MCF 10A (cell line): ENCODE measurements at regions of chr12 and their contacts with region 1.

Region 1: DNA sequence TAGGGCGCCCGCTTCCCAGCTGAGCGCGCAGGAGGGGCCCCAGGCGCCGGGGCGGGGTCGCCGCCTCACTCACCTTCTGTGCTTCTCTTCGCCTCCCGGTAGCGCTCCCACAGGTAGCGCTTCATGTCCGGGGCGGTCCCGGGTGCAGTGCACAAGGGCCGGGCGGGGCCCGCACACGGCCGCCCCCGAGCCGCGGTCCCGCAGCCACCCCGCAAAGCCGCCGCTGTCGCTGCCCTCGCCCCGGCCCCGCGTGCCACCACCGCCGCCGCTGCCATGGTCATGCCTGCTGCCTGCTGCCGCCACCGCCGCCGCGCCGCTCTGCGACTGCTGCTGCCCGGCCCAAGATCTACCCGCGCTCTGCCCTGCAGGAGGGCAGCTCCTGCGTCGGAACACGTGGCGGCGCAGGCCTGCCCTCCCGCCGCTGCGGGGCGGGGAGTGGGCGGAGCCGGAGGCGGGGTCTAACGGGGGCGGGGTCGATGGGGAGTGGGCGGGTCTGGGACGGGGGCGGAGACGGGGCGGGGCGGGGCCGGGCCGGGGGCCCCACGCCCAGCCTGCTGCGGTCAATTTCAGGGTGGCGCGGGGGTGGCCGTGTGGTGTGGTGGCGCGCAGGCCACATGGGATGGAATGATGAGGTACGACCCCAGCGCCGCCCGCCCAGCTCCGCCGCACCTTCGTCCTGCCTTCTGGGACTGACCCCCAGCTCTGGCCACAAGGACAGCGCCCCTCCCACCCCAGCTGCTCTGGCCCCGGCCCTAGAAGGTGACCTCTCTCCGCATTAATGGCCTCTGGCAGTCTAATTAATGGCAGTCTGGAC is at the start of gene NT5DC3:
- DNase-seq: peak; percentile 83
- H3K4me3 Mint-ChIP-seq: peak within 1 kb of the TSS; percentile 89
- H3K27ac Mint-ChIP-seq: peak within 1 kb of the TSS; percentile 76
- H3K4me1 Mint-ChIP-seq: peaks cover 25% of the 10 kb centered on the region
- H3K27me3 Mint-ChIP-seq: no peaks in the 10 kb centered on the region
- CTCF ChIP-seq: peak; percentile 13
- total RNA-seq, gene NT5DC3: 15.1 and 18.3 TPM in 2 replicates

Region 2: GRCh38 chr12:103806803-103807202 is 34.3 kb before region 1 on chr12:
- CTCF ChIA-PET with region 1: interaction called, 7 read pairs
- POLR2A ChIA-PET with region 1: interaction called, 13 read pairs
- intact Hi-C with region 1: loop called (anchors 1 kb)
- DNase-seq: peak; percentile 27
- H3K4me3 Mint-ChIP-seq: no peak overlapping the region
- H3K27ac Mint-ChIP-seq: no peak overlapping the region
- H3K4me1 Mint-ChIP-seq: peaks cover 37% of the 10 kb centered on the region
- H3K27me3 Mint-ChIP-seq: no peaks in the 10 kb centered on the region
- CTCF ChIP-seq: no peak

Region 3: DNA sequence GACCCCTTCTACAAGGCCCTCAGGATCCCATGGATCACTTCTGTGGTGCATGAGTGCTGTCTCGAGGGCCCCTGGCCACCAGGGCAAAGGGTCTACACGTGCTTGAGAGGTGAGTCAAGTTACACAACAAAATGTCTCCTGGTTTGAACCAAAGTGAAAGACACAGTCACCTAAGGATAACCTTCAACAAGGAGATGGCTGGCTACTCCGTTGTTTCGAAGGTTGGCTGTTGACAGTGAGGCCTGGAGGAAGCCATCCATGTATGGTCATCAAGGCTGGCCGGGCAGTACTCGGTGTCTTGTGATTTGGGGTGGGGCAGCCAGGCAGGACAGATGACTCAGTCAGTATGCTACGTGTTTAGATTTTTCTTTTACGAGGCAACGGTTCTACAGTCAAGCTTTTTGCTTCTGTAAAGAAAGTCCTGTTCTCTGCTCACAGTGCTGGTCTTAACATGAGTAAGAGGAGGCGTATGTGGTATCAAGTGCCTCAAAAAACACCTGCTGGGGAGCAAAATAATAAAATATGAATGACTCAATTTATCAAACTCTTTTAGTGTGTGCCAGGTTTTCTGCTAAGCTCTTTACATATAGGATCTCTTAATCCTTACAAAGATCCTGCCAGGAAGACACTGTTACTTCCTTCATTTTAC is 18.0 kb after region 1 on chr12:
- CTCF ChIA-PET with region 1: interaction called, 7 read pairs
- POLR2A ChIA-PET with region 1: interaction called, 45 read pairs
- intact Hi-C with region 1: loop called (anchors 1 kb)
- DNase-seq: peak; percentile 89
- H3K4me3 Mint-ChIP-seq: peak overlapping the region; percentile 35
- H3K27ac Mint-ChIP-seq: peak overlapping the region; percentile 100
- H3K4me1 Mint-ChIP-seq: peaks cover 26% of the 10 kb centered on the region
- H3K27me3 Mint-ChIP-seq: no peaks in the 10 kb centered on the region
- CTCF ChIP-seq: no peak

Region 4: DNA sequence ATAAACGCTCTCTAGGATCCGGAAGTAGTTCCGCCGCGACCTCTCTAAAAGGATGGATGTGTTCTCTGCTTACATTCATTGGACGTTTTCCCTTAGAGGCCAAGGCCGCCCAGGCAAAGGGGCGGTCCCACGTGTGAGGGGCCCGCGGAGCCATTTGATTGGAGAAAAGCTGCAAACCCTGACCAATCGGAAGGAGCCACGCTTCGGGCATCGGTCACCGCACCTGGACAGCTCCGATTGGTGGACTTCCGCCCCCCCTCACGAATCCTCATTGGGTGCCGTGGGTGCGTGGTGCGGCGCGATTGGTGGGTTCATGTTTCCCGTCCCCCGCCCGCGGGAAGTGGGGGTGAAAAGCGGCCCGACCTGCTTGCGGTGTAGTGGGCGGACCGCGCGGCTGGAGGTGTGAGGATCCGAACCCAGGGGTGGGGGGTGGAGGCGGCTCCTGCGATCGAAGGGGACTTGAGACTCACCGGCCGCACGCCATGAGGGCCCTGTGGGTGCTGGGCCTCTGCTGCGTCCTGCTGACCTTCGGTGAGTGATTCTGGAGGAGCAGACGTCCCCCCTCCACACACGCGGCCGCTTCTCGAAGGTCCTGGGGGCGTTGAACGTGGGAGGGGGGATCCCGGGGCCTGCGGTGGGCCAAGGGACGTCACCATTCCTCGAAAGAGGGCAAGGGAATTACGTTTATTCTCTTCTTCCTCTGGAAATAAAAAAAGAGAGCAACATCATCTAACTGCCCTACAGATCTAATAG is 89.1 kb after region 1 on chr12 and contains the start of gene HSP90B1:
- CTCF ChIA-PET with region 1: interaction called, 3 read pairs
- POLR2A ChIA-PET with region 1: interaction called, 22 read pairs
- intact Hi-C with region 1: no loop called
- DNase-seq: peak; percentile 100
- H3K4me3 Mint-ChIP-seq: peak within 1 kb of the TSS; percentile 75
- H3K27ac Mint-ChIP-seq: peak within 1 kb of the TSS; percentile 58
- H3K4me1 Mint-ChIP-seq: peaks cover 23% of the 10 kb centered on the region
- H3K27me3 Mint-ChIP-seq: no peaks in the 10 kb centered on the region
- CTCF ChIP-seq: no peak
- total RNA-seq, gene HSP90B1: 1,052 and 1,334 TPM in 2 replicates